CD4-positive, alpha-beta memory T cell (primary cell): ENCODE measurements at regions of chr3 and their contacts with region 1.

Region 1: DNA sequence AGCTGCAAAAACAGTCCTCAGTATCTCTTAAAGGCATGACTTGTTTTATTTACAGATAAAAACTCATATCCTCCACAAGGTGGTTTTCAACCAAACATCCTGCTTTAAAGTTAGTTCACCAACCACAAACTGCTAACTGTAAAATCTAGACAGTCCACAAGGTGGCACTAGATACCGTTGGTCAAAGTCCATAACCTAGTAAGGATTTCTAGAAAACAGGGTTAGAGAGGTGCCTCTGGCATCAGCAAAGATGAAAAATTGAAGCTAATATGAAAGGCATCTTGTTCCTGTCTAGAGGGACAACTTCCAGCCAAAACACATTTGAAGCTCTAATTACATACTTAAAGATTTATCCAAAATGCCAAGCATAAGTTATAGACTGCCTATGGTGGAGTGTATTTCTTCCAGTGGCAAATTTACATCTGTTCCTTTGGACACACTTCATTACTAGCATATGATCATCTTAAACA is 56.0 kb downstream of the ZMAT3 start:
- DNase-seq: peak; percentile 79 to 82 (median 79)
- H3K4me3 ChIP-seq: no peak overlapping the region
- H3K4me3 Mint-ChIP-seq: peak overlapping the region in 2 of 8 donors; percentile 26 to 33
- H3K27ac ChIP-seq: no peak overlapping the region
- H3K27ac Mint-ChIP-seq: peak overlapping the region in 5 of 7 donors; percentile 4 to 66 (median 53)
- H3K4me1 ChIP-seq: peaks cover 27% of the 10 kb centered on the region
- H3K4me1 Mint-ChIP-seq: peaks cover 19 to 34% (median 31%) of the 10 kb centered on the region in 4 donors
- H3K27me3 ChIP-seq: no peaks in the 10 kb centered on the region
- H3K27me3 Mint-ChIP-seq: peaks cover 0 to 1% of the 10 kb centered on the region in 2 donors

Region 2: DNA sequence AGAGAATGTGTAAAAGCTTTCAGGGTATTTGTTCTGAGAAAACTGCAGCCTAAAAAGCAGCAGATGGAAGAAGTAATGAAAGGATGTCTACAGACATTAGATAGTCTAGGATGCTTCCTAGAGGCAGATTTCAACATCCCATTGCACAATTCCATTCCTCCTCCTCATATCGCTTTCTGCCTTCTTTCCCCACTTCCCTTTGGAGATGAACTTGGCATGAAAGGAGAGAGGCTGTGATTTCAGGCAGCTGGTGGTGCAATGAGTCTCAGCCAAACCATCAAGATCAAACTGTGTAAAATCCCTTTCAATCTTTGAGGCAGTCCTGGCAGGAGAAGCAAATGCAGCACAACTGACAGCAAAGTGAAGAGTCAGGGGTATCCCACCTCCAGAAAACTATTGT is 918.0 kb before region 1 on chr3:
- CTCF ChIA-PET with region 1: no interaction called
- POLR2A ChIA-PET with region 1: no interaction called
- intact Hi-C with region 1: no loop called
- DNase-seq: no peak
- H3K4me3 ChIP-seq: no peak overlapping the region
- H3K4me3 Mint-ChIP-seq: no peak overlapping the region
- H3K27ac ChIP-seq: no peak overlapping the region
- H3K27ac Mint-ChIP-seq: no peak overlapping the region
- H3K4me1 ChIP-seq: no peaks in the 10 kb centered on the region
- H3K4me1 Mint-ChIP-seq: peaks cover 0 to 3% (median 0%) of the 10 kb centered on the region in 4 donors
- H3K27me3 ChIP-seq: no peaks in the 10 kb centered on the region
- H3K27me3 Mint-ChIP-seq: no peaks in the 10 kb centered on the region

Region 3: GRCh38 chr3:179037351-179037750 is 21.8 kb after region 1 on chr3:
- CTCF ChIA-PET with region 1: interaction called, 29 read pairs
- POLR2A ChIA-PET with region 1: interaction called, 14 read pairs
- intact Hi-C with region 1: no loop called
- DNase-seq: peak; percentile 61 to 71 (median 65)
- H3K4me3 ChIP-seq: peak overlapping the region in 1 of 2 donors; percentile 27
- H3K4me3 Mint-ChIP-seq: peak overlapping the region in 7 of 8 donors; percentile 47 to 79 (median 75)
- H3K27ac ChIP-seq: peak overlapping the region; percentile 24
- H3K27ac Mint-ChIP-seq: peak overlapping the region in 1 of 7 donors; percentile 90
- H3K4me1 ChIP-seq: peaks cover 43% of the 10 kb centered on the region
- H3K4me1 Mint-ChIP-seq: peaks cover 11 to 23% (median 15%) of the 10 kb centered on the region in 4 donors
- H3K27me3 ChIP-seq: no peaks in the 10 kb centered on the region
- H3K27me3 Mint-ChIP-seq: no peaks in the 10 kb centered on the region

Region 4: GRCh38 chr3:179098388-179099077 is 82.9 kb after region 1 on chr3:
- CTCF ChIA-PET with region 1: interaction called, 15 read pairs
- POLR2A ChIA-PET with region 1: no interaction called
- intact Hi-C with region 1: no loop called
- DNase-seq: no peak
- H3K4me3 ChIP-seq: no peak overlapping the region
- H3K4me3 Mint-ChIP-seq: no peak overlapping the region
- H3K27ac ChIP-seq: no peak overlapping the region
- H3K27ac Mint-ChIP-seq: no peak overlapping the region
- H3K4me1 ChIP-seq: no peaks in the 10 kb centered on the region
- H3K4me1 Mint-ChIP-seq: peaks cover 0 to 3% (median under 1%) of the 10 kb centered on the region in 4 donors
- H3K27me3 ChIP-seq: no peaks in the 10 kb centered on the region
- H3K27me3 Mint-ChIP-seq: peaks cover 0 to 3% of the 10 kb centered on the region in 2 donors

Region 5: GRCh38 chr3:179224584-179224983 is 209.0 kb after region 1 on chr3:
- CTCF ChIA-PET with region 1: interaction called, 3 read pairs
- POLR2A ChIA-PET with region 1: no interaction called
- intact Hi-C with region 1: loop called (anchors 5 kb)
- DNase-seq: no peak
- H3K4me3 ChIP-seq: no peak overlapping the region
- H3K4me3 Mint-ChIP-seq: no peak overlapping the region
- H3K27ac ChIP-seq: no peak overlapping the region
- H3K27ac Mint-ChIP-seq: peak overlapping the region in 1 of 7 donors; percentile 24
- H3K4me1 ChIP-seq: no peaks in the 10 kb centered on the region
- H3K4me1 Mint-ChIP-seq: peaks cover 0 to 1% (median 0%) of the 10 kb centered on the region in 4 donors
- H3K27me3 ChIP-seq: no peaks in the 10 kb centered on the region
- H3K27me3 Mint-ChIP-seq: no peaks in the 10 kb centered on the region

Region 6: DNA sequence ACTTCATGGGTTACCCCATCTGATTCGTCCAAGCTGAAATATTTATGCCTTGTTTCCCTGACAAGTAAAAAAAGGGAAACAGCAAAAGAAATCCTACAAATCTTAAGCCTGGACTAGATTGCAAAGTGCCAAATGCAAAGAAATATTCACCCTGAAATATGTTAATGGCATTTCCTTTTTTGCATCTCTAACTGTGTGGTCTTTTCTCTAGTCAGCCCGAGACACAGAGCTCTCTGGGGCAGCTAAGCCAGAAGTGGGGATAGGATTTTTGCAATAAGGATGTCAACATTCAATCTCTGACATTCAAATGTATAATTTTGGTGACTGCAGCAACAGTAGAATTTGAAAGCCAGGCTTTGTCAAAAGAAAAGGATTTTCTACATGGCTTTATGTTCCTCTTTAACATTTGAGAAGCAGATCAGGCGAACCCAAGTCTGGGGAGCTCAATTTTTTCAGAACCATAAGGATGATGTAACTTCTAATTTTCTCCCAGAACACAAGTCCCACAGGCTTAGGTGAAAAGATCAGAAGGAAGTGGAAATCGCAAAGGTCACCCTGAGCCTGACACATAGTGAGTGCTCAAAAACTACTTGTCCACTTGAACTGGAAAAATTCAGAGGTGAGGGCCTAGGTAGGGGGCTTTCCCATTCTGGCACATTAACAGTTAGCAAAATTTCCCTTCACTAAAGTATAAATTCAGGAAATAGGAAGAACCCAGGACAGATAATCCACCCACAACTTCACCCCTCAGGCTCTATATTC is 263.5 kb after region 1 on chr3:
- CTCF ChIA-PET with region 1: no interaction called
- POLR2A ChIA-PET with region 1: no interaction called
- intact Hi-C with region 1: no loop called
- DNase-seq: no peak
- H3K4me3 ChIP-seq: no peak overlapping the region
- H3K4me3 Mint-ChIP-seq: no peak overlapping the region
- H3K27ac ChIP-seq: no peak overlapping the region
- H3K27ac Mint-ChIP-seq: no peak overlapping the region
- H3K4me1 ChIP-seq: no peaks in the 10 kb centered on the region
- H3K4me1 Mint-ChIP-seq: no peaks in the 10 kb centered on the region
- H3K27me3 ChIP-seq: peaks cover 3% of the 10 kb centered on the region
- H3K27me3 Mint-ChIP-seq: peaks cover 13 to 24% of the 10 kb centered on the region in 2 donors

Region 7: GRCh38 chr3:179309225-179310078 is 293.9 kb after region 1 on chr3:
- CTCF ChIA-PET with region 1: interaction called, 80 read pairs
- POLR2A ChIA-PET with region 1: interaction called, 14 read pairs
- intact Hi-C with region 1: no loop called
- DNase-seq: no peak
- H3K4me3 ChIP-seq: no peak overlapping the region
- H3K4me3 Mint-ChIP-seq: no peak overlapping the region
- H3K27ac ChIP-seq: no peak overlapping the region
- H3K27ac Mint-ChIP-seq: no peak overlapping the region
- H3K4me1 ChIP-seq: no peaks in the 10 kb centered on the region
- H3K4me1 Mint-ChIP-seq: peaks cover 0 to 1% (median 0%) of the 10 kb centered on the region in 4 donors
- H3K27me3 ChIP-seq: no peaks in the 10 kb centered on the region
- H3K27me3 Mint-ChIP-seq: peaks cover 0 to 2% of the 10 kb centered on the region in 2 donors

Region 8: GRCh38 chr3:179562591-179563270 is 547.1 kb after region 1 on chr3 and contains the start of gene ACTL6A:
- CTCF ChIA-PET with region 1: interaction called, 6 read pairs
- POLR2A ChIA-PET with region 1: no interaction called
- intact Hi-C with region 1: loop called (anchors 1 kb)
- DNase-seq: peak; percentile 96 to 98 (median 96)
- H3K4me3 ChIP-seq: peak within 1 kb of the TSS; percentile 67 to 76
- H3K4me3 Mint-ChIP-seq: peak within 1 kb of the TSS; percentile 96 to 100 (median 99)
- H3K27ac ChIP-seq: peak within 1 kb of the TSS; percentile 58
- H3K27ac Mint-ChIP-seq: peak within 1 kb of the TSS; percentile 81 to 98 (median 97)
- H3K4me1 ChIP-seq: peaks cover 29% of the 10 kb centered on the region
- H3K4me1 Mint-ChIP-seq: peaks cover 22 to 37% (median 28%) of the 10 kb centered on the region in 4 donors
- H3K27me3 ChIP-seq: no peaks in the 10 kb centered on the region
- H3K27me3 Mint-ChIP-seq: peaks cover 0 to 4% of the 10 kb centered on the region in 2 donors
- total RNA-seq, gene ACTL6A: 56.9 to 62.4 TPM